A549 (cell line): ENCODE measurements at regions of chr1 and their contacts with region 1.

Region 1: DNA sequence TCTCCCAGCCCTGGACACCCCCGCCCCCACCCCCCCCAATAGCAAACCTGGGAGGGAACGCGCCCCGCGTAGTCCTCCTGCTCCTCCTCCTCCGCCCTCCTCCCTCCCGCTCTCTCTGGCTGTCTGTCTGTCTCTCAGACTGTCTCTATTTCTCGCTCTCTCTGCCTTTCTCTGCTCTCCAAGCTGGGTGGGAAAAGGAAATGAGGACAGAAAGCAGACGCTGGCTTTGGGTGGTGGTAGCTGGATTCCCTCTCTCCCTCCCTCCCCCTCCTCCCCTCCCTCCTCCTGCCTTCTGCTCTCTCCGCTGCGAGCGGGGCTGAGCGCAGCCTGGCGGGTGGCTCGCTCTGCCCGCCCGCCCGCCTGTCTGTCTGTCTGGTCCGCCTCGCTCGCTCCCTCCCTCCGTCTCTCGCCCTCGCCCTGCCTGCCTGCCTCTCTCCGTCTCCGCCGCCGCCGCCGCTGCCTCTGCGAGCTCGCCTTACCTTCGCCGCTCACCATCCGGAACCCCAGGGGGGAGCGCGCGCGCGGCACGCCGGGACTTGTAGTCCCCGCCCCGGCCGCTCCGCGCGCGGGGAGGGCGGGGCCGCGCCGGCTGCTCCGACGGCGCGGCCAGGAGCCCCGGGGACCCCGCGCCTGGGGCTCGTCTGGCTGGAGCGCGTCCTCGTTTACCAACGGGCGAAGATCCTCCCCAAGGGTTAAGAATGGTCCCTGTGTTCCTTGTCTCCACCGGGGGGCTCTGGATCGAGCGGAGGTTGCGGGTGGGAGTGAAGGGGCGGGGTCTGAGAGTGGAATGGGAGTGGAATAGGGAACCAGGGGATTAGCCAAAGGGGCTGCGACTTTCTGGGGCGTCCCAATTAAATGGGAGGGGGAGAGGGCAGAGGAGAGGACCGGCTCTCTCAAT is at the start of gene AHDC1:
- DNase-seq: peak; percentile 80 to 88
- ATAC-seq: peak; percentile 71 to 76
- H3K4me3 ChIP-seq: peak within 1 kb of the TSS; percentile 90
- H3K27ac ChIP-seq: peak within 1 kb of the TSS; percentile 83 to 89
- H3K4me1 ChIP-seq: peaks cover 47% of the 10 kb centered on the region
- CTCF ChIP-seq: no peak
- EP300 ChIP-seq: no peak
- POLR2A ChIP-seq: peak; percentile 65
- RAD21 ChIP-seq: 0 out of 5 replicates have a peak, but pooled peaks of 1 of the 2 experiments have one; percentile 16
- polyA plus RNA-seq, gene AHDC1: 1.3 and 2.6 TPM in 2 replicates

Region 2: DNA sequence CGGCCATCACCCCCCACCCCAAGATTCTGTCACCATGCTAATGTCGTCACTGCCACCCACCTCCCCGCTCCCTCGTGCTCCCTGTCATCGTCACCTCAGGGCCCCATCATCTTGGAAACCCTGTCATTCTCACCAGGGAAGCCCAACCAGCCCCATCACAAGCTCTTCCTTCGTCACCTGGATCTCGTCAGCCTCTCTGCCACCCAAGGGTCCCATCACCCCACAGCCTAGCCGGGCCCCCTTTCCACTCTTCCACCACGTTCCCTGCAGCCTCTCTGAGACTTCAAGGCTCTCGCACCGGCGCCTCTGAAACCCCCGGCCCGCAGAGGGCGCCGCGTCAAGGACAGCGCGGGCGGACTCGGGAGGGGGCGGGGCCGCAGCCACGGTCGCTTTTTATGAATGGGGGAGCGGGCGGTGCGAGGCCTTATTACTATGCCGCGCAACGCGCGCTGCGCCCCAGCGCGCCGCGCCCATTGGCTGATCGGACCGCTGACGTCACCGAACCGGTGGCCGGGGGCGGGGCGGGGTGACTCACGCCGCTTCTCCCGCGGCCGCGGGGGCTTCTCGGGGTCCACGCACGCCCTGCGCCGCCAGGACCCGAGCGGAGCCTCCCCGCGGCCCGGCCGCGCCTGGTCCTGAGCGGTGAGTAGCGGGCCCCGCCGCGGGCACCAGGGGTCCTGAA is 211.7 kb before region 1 on chr1 and contains the start of gene GPR3:
- CTCF ChIA-PET with region 1: interaction called, 67 read pairs
- POLR2A ChIA-PET with region 1: no interaction called
- DNase-seq: peak; percentile 81 to 88
- ATAC-seq: peak; percentile 74 to 85
- H3K4me3 ChIP-seq: peak within 1 kb of the TSS; percentile 70
- H3K27ac ChIP-seq: peak within 1 kb of the TSS; percentile 74 to 89
- H3K4me1 ChIP-seq: peaks cover 17% of the 10 kb centered on the region
- CTCF ChIP-seq: peak; percentile 50
- EP300 ChIP-seq: no peak
- POLR2A ChIP-seq: no peak
- RAD21 ChIP-seq: peak; percentile 12 to 33; a peak in 2 of 5 replicates
- polyA plus RNA-seq, gene GPR3: 1.3 and 1.7 TPM in 2 replicates

Region 3: DNA sequence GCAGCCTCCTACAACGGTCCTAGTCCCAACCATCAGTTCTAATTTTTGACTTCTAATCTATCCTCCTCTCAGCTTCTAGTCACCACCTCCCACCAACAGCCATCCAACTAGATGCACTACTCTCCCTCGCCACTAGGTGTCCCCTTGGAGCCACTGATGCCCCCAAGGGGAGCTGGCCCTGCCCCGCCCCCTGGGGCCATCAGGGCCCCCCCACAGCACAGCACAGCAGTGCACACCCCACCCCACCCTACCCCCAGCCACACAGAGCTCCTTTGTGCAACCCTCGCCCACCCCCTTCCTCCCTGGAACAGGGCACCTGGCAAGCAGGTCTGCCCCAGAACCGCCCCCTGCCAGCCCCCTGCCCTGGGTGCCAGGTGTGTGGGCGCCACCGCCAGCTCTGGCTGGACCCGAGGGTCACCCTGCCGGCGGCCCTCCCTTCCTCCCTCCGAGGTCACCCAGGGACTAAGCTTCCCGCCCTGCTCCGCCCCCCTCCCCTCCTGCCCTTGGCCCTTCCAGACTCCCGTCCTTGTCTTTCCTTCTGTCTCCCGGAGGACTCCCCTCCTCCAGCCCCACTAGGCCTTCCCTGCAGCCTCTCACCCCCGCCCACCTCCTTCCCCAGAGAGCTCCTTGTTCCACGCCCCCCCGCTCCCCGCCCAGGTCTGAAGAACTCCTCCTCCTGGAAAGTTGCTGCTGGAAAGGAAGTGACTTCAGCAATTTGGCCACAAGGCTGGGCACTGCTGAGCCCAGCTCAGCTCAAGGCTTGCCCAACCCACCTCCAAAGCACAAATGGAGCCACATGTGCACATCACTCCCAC is 46.9 kb before region 1 on chr1:
- CTCF ChIA-PET with region 1: interaction called, 314 read pairs
- POLR2A ChIA-PET with region 1: interaction called, 9 read pairs
- DNase-seq: peak; percentile 91 to 95
- ATAC-seq: peak; percentile 85 to 92
- H3K4me3 ChIP-seq: peak overlapping the region; percentile 34
- H3K27ac ChIP-seq: peak overlapping the region; percentile 89 to 94
- H3K4me1 ChIP-seq: peaks cover 56% of the 10 kb centered on the region
- CTCF ChIP-seq: peak; percentile 68
- EP300 ChIP-seq: no peak
- POLR2A ChIP-seq: peak; percentile 54
- RAD21 ChIP-seq: peak; percentile 77 to 88

Region 4: DNA sequence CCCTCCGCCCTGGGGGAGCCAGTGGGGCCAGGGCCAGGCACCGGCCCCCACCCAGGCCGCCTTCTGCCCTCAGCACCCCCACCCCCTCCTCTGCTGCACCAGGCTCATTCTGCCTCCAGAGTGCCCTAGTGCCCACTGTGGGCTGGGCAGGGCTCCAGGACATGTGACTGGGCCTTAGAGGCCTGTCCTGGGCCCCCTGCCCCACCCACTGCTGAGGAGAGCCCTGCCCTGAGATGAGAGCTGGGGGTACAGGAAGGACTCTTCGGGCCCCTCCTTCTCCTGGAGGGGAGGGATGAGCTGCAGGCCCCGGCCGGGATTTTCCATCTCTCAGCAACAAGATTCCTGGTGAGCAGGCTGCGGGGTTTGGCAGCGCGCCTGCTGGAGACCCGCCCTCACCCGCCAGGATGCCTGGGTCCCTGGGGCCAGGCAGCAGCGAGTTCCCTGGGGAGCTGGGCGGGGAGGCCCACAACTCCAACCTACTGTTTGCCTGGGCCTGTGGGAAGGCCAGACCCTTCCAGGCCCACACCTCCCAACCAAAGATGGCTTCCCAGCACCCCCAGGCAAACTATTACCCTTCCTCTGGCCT is 14.0 kb before region 1 on chr1:
- CTCF ChIA-PET with region 1: interaction called, 11 read pairs
- POLR2A ChIA-PET with region 1: no interaction called
- DNase-seq: peak in 1 of 2 experiments; percentile 49
- ATAC-seq: peak; percentile 45 to 66; a peak in 4 of 6 replicates
- H3K4me3 ChIP-seq: no peak overlapping the region
- H3K27ac ChIP-seq: peak overlapping the region; percentile 59 to 84; a peak in 5 of 6 replicates
- H3K4me1 ChIP-seq: peaks cover 38% of the 10 kb centered on the region
- CTCF ChIP-seq: no peak
- EP300 ChIP-seq: no peak
- POLR2A ChIP-seq: no peak
- RAD21 ChIP-seq: no peak

Region 5: DNA sequence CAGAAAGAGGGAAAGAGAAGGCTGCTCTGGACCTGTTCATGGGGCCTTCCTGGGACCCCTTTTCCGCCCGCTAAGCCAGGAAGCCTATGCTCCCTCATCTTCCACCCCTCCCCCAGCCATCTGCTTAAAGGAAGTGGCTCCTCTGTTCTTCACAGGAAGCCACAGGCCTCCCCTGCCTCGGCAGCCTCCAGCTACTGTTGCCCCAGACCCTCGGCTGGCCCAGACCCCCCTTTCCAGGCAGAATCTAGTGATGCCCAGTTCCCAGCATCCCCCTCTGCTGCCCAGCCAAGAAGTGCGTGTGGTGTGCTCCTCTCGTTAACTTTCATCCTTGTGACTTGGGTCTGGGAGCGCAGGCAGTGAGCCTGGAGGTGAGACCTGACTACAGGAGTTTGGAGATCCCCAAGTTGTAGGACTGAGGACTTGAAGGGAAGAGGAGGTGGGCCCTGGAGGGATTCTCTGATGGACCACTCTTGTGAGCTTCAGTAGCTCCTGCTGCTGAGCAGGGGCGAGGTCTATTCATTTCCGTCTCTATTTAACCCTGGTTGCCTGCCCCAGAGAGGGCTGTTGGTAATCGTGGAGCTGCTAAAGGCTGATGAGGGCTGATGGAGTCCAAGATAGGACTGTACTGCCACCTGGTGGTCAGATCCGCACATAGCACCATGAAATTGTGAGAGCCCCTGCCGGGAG is 58.9 kb after region 1 on chr1:
- CTCF ChIA-PET with region 1: interaction called, 151 read pairs
- POLR2A ChIA-PET with region 1: no interaction called
- DNase-seq: peak; percentile 68 to 71
- ATAC-seq: peak; percentile 62 to 80
- H3K4me3 ChIP-seq: no peak overlapping the region
- H3K27ac ChIP-seq: peak overlapping the region; percentile 38 to 72; a peak in 4 of 6 replicates
- H3K4me1 ChIP-seq: peaks cover 9% of the 10 kb centered on the region; the same call in 1 of the 3 replicates
- CTCF ChIP-seq: peak; percentile 80
- EP300 ChIP-seq: no peak
- POLR2A ChIP-seq: no peak
- RAD21 ChIP-seq: peak; percentile 81 to 83

Region 6: DNA sequence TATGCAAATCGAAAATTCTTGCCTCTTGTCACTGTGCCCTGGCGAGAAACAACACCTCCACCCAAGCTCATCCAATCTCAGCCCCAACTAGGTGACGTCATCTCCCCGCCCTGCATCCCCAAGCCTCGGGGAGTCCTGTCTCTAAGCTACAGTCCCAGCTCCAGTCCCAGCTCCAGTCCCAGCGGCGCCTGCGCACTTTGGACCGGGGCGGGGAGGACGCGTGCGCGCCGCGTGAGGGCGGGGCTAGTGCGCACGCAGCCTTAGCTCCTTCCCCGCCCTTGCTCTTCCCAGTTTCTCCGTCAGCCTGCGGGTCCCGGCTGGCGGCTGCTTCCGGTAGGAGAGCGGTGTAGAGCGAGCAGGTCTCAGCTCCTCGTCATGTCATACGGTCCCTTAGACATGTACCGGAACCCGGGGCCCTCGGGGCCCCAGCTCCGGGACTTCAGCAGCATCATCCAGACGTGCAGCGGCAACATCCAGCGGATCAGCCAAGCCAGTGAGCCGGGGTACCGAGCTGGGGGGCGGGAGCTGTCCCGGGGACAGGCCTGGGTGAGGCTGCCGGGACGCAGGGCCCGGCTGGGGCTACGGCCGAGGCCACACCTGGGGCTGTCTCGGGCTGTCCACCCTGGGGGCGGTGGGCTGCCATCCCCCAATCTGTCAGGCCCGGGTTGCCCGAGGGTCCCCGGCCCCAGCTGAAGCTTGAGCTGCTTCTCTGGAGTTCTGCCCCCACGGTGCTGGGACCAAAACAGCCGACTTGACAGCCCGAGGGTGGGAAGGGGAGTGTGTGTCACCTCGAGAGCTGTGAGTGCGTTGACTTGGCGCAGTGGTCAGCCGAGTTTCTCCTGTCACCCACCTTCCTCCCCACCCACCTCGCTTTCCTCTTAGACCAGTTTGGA is 169.2 kb after region 1 on chr1 and contains the start of gene STX12:
- CTCF ChIA-PET with region 1: no interaction called
- POLR2A ChIA-PET with region 1: no interaction called
- DNase-seq: peak; percentile 95 to 97
- ATAC-seq: peak; percentile 98 to 99
- H3K4me3 ChIP-seq: peak within 1 kb of the TSS; percentile 84
- H3K27ac ChIP-seq: peak within 1 kb of the TSS; percentile 72 to 90
- H3K4me1 ChIP-seq: peaks cover 15% of the 10 kb centered on the region; the same call in 2 of the 3 replicates
- CTCF ChIP-seq: no peak
- EP300 ChIP-seq: no peak
- POLR2A ChIP-seq: peak; percentile 74
- RAD21 ChIP-seq: no peak
- polyA plus RNA-seq, gene STX12: 12.8 and 14.6 TPM in 2 replicates